AG04449 (cell line): ENCODE measurements at regions of chr12 and their contacts with region 1.

Region 1: DNA sequence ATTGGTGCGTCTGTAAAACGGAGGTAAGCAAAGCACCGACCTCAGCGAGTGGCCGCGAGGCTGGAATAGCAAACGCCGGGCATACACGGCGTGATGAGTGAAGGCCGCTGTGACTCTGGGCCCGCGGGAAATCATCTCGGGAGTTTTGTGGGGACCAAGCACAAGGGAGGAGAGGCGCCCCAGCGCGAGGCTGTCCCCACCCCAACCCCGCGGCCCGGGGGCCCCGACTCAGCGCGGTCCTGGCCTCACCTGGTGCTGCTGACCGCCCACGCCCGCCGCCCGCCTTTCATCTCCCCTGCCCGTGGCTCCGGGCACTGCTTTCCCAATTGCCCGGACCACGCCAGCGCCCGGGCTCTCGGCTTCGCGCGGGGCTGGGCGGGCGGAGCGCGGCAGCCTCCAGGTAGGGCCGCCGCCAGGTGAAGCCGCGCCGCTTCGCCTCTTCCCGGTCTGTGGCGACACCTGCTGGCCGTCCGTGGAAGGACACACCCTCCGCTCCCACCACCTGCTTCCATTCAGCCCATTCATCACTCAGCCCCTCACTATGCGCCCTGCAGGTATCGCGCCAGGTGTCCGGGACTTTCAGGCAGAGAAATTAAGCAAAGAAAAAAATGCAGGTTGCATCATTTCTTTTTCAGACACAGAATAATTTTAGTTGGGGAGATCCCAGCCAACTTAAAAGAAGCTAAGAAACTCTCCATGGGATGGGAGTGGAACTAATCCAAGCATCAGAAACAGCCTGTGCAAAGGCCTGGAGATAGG is 360.4 kb downstream of the MED13L start:
- DNase-seq: no peak
- H3K4me3 ChIP-seq: no peak overlapping the region
- CTCF ChIP-seq: peak; percentile 92

Region 2: DNA sequence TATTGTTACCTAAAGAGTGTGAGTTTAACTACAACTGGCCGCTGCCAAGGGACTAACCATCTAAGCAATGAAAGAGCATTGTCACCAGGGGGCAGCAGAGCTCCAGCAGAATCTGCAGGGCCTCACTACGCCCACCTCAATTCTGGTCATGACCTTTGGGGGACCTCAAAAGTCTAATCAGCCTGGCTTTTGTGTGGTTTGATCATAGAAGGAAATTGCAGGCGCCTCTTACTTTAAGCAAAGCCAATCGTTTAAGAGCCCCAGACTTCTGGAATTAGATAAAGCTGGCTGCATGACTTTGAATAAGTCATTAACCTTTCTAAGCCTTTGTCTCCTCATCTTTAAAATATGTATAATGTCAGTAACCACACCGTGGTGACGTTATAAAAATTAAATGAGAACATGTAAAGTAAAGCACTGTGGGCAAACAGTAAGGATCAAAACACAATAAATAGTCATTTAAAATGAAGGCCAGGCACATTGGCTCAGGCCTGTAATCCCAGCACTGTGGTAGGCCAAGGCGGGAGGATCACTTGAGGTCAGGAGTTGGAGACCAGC is 1291.7 kb before region 1 on chr12:
- CTCF ChIA-PET with region 1: interaction called, 75 read pairs
- POLR2A ChIA-PET with region 1: no interaction called
- DNase-seq: no peak
- H3K4me3 ChIP-seq: no peak overlapping the region
- CTCF ChIP-seq: peak; percentile 84

Region 3: DNA sequence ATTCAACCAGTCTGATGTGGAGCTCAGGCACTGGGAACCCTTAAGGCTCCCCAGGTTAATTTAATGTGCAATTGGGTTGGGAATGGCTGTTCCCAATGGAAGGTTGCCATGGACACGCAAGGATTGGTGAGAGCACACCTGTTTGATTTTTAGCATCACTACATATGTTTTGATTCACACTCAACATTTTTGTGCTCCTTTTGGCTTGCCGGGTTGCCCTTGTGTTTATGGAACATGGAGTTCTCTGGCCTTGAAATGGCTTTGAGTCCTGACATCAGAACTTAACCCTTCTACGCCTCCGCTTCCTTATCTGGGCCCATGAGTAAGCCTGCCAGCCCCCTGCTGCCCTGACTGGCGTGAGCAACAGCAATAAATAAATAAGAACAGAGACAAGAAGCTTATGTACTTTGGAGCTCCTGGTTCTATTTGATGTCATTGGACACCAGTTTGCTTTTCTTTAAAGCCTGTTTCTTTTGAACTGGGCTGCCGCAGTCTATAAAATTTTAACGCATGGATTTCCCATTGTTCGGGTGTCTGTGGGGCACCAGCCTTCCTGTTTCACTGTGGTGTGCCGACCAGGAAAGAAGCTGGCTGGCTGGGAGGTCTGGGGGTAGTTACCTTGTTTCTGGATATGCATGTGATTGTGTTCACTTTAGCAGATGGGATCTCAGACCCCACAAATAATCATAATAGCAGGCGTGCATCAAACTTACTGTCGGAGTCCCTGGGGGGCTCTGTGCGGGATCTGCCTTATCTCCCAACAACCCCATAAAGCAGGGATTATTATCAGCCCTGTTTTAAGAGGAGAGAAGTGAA is 1260.9 kb before region 1 on chr12:
- CTCF ChIA-PET with region 1: interaction called, 98 read pairs
- POLR2A ChIA-PET with region 1: no interaction called
- DNase-seq: no peak
- H3K4me3 ChIP-seq: no peak overlapping the region
- CTCF ChIP-seq: no peak

Region 4: DNA sequence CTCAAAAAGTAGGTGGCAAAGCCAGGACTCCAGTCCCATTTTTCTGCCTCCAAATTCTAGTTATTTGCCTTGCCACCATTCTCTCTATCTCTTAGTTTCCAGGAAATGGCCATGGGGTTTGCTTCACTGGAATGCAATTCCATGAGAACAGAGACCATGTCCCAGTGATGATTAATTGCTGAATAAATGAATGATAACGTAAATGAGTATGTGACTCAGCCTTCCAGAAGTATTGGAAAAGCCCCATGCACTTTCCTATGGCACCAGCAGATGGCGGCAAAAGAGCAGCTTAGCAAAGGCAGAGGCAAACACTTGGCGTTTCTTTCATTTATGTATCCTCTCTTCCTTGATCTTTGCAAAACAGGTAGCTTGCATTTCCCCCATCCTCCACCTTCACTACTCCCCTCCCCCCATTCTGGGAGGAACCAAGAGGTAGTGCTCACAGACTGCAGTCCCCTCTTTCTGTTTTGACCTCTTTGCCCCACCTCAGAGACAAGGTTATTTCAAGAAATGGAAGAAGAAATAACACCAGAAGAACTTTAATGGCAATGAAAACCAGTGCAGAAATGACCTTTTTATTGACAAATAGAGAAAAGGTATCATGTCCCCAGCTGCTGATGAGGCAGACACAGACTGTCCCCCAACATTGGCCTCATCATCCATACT is 1254.4 kb before region 1 on chr12:
- CTCF ChIA-PET with region 1: interaction called, 98 read pairs
- POLR2A ChIA-PET with region 1: no interaction called
- DNase-seq: peak; percentile 34
- H3K4me3 ChIP-seq: no peak overlapping the region
- CTCF ChIP-seq: peak; percentile 86

Region 5: GRCh38 chr12:114668151-114668885 is 1248.8 kb before region 1 on chr12:
- CTCF ChIA-PET with region 1: interaction called, 98 read pairs
- POLR2A ChIA-PET with region 1: no interaction called
- DNase-seq: no peak
- H3K4me3 ChIP-seq: peak overlapping the region; percentile 52
- CTCF ChIP-seq: peak; percentile 75

Region 6: GRCh38 chr12:115752913-115753726 is 164.0 kb before region 1 on chr12:
- CTCF ChIA-PET with region 1: interaction called, 14 read pairs
- POLR2A ChIA-PET with region 1: no interaction called
- DNase-seq: peak; percentile 17
- H3K4me3 ChIP-seq: no peak overlapping the region
- CTCF ChIP-seq: peak; percentile 54

Region 7: GRCh38 chr12:115930336-115930735 is 13.2 kb after region 1 on chr12:
- CTCF ChIA-PET with region 1: interaction called, 16 read pairs
- POLR2A ChIA-PET with region 1: no interaction called
- DNase-seq: no peak
- H3K4me3 ChIP-seq: no peak overlapping the region
- CTCF ChIP-seq: no peak